GM10248 (cell line): ENCODE measurements at regions of chr15 and their contacts with region 1.

Region 1: GRCh38 chr15:48877630-48878595 is at the start of gene EID1:
- DNase-seq: peak; percentile 90
- CTCF ChIP-seq: no peak

Region 2: GRCh38 chr15:48682949-48683651 is 194.8 kb before region 1 on chr15:
- CTCF ChIA-PET with region 1: no interaction called
- POLR2A ChIA-PET with region 1: no interaction called
- DNase-seq: no peak
- CTCF ChIP-seq: no peak

Region 3: GRCh38 chr15:48888836-48889235 is 10.9 kb after region 1 on chr15:
- CTCF ChIA-PET with region 1: interaction called, 20 read pairs
- POLR2A ChIA-PET with region 1: no interaction called
- DNase-seq: no peak
- CTCF ChIP-seq: no peak